MCF 10A (cell line): ENCODE measurements at regions of chrX and their contacts with region 1.

Region 1: DNA sequence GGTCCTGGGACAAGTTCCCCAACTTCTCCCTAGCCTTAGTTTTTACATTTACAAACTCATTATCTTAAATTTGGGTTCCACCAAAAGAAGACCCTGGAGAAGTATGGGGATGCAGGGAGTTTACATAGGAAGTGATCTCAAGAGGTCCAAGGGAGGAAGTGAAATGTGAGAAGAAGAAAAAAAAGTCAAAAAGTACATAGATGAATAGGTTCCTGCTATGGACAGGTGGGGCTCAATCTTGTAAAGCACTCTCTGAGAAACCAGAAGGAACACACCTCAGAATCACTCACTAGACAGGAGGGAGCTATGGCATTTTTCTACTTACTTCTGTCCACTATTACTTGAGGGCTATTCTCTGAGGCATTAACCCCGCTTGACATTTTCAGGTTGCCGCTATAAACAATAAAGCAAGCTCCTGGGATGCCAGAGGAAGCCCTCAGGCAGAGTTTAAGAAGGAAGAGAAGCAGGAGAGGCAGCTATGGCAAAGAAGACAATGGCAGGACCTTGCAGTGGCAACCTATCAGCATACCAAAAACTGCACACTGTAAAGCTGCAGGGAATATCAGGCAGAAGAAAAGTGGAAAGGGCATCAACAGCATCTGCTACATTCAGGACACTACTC is 56.5 kb downstream of the ARHGAP6 start:
- DNase-seq: no peak
- H3K4me3 Mint-ChIP-seq: no peak overlapping the region
- H3K27ac Mint-ChIP-seq: no peak overlapping the region
- H3K4me1 Mint-ChIP-seq: no peaks in the 10 kb centered on the region
- H3K27me3 Mint-ChIP-seq: peaks cover 27% of the 10 kb centered on the region
- CTCF ChIP-seq: no peak

Region 2: DNA sequence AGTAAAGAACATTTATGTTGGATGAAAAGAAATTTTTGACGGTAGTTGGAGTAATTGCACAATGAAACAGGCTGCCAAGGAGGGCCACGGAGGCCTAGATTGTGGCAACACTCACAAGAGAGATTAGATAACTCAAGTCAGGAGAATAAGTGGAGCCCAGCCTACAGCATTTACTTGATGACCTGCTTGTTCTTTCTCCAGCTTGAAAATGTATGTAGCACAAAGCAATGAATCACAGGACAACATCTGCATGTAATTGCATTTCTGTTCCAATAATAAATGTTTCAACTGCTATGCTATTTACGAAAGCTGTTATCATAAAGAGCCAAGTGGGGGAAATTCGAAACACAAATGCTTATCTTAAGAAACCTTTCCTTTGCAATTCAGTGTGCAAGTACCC is 767.6 kb before region 1 on chrX:
- CTCF ChIA-PET with region 1: no interaction called
- POLR2A ChIA-PET with region 1: no interaction called
- intact Hi-C with region 1: no loop called
- DNase-seq: no peak
- H3K4me3 Mint-ChIP-seq: no peak overlapping the region
- H3K27ac Mint-ChIP-seq: no peak overlapping the region
- H3K4me1 Mint-ChIP-seq: no peaks in the 10 kb centered on the region
- H3K27me3 Mint-ChIP-seq: peaks cover 22% of the 10 kb centered on the region
- CTCF ChIP-seq: no peak

Region 3: GRCh38 chrX:11619441-11619840 is 10.2 kb after region 1 on chrX:
- CTCF ChIA-PET with region 1: interaction called, 11 read pairs
- POLR2A ChIA-PET with region 1: no interaction called
- intact Hi-C with region 1: no loop called
- DNase-seq: peak; percentile 17
- H3K4me3 Mint-ChIP-seq: no peak overlapping the region
- H3K27ac Mint-ChIP-seq: no peak overlapping the region
- H3K4me1 Mint-ChIP-seq: no peaks in the 10 kb centered on the region
- H3K27me3 Mint-ChIP-seq: peaks cover 38% of the 10 kb centered on the region
- CTCF ChIP-seq: no peak